Transverse colon (tissue), 4 donors: ENCODE measurements at regions of chr12 and their contacts with region 1.

Region 1: GRCh38 chr12:130646716-130647370 is 69.3 kb downstream of the RIMBP2 start:
- DNase-seq: no peak
- H3K4me3 ChIP-seq: no peak overlapping the region
- H3K27ac ChIP-seq: no peak overlapping the region
- H3K4me1 ChIP-seq: no peaks in the 10 kb centered on the region
- H3K27me3 ChIP-seq: no peaks in the 10 kb centered on the region
- CTCF ChIP-seq: no peak
- EP300 ChIP-seq: no peak
- POLR2A ChIP-seq: no peak

Region 2: GRCh38 chr12:130617219-130617618 is 29.6 kb before region 1 on chr12:
- in situ Hi-C with region 1: no loop called
- intact Hi-C with region 1: loop called (anchors 1 kb)
- DNase-seq: no peak
- H3K4me3 ChIP-seq: no peak overlapping the region
- H3K27ac ChIP-seq: no peak overlapping the region
- H3K4me1 ChIP-seq: no peaks in the 10 kb centered on the region
- H3K27me3 ChIP-seq: no peaks in the 10 kb centered on the region
- CTCF ChIP-seq: no peak
- EP300 ChIP-seq: no peak
- POLR2A ChIP-seq: no peak